ENCODE measurements at regions of chr2 and their contacts with region 1.

Region 1: DNA sequence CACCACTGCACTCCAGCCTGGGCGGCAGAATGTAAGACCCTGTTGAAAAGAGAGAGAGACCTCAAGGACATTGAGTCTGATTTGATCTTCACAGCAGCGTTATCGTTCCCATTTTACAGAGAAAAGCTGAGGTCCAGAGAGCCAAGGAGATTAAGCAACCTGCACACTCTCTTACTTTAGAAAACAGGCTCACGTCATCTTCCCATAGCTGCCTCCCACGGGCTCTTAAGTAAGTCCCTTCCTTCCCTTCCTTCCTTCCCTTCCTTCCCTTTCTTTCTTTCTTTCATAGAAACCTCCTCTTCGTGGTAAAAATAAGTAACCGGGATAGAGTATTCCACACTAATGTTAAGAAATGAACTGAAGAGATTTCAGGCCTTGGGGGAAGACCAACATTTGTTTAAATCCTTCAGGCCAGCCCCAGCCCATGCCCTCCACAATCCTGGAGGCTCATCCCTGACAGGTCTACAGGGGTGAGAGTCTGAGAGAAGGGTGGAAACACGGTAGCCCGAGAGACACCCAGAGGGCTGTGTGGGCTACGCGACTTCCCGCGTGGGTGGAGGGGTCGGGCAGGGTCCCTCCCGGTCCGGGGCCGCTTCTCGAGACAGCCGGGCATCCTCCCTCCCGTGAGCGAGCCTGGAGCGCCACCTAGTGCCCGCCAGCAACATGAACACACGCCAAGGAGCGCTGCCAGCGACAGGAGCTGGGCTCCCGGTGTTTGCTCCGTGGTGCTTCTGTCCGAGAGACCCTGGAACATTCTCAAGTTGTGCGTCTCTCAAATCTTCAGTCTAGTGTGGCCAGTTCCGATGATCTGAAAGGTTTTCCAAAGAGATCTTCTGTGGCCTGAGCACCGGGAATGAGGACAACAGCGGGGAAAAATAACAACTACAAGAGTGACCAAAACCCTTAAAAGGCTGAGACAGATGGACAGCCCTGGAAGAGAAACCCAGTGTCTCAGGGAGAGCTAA is 160.3 kb downstream of the INO80D start:
- DNase-seq: peak; percentile 88
- H3K4me3 ChIP-seq: peak overlapping the region; percentile 23 to 59
- H3K27ac ChIP-seq: no peak overlapping the region
- H3K4me1 ChIP-seq: peaks cover 5% of the 10 kb centered on the region in 2 experiments; a peak in 2 of 4 replicates
- H3K27me3 ChIP-seq: peaks cover 14% of the 10 kb centered on the region; the same call in 1 of the 2 replicates
- CTCF ChIP-seq: peak; percentile 94
- EP300 ChIP-seq: no peak
- RAD21 ChIP-seq: peak; percentile 97

Region 2: DNA sequence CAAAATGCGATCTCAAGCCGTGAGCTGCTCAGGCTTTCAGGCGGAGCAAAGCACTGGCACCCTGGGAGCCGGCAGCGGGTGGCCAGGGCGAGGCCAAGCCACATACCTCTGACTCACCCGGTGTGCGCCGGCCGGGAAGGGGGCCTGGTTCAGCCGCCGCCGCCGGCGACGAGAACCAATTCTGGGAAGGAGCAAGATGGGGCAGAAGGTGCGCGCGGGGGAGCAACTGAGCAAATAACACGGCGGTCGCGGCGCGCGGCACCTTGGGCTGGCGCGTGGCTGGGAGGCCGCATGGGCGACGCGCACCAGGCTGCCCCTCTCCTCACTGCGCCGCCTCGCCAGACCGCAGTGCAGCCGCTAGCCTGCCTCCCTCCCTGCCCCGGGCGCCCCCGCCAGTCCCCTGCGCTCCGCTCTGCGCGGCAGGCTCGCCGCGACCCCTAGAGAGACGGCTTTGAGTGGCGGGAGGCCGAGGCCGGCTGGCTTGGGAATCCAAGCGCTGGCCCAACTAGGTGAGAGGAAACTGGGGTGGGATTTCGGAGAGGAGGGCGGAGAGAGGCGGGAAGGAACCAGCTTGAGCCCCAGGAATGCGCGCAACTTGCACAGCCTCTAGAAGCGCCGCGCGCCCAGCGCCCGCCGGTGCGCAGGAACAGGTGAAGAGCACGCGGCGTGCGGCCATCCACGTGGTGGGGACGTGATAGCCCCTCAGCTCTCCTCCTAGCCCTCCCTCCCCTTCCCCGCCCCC is 240.2 kb before region 1 on chr2:
- CTCF ChIA-PET with region 1: interaction called, 22 read pairs
- POLR2A ChIA-PET with region 1: no interaction called
- DNase-seq: peak; percentile 76
- H3K4me3 ChIP-seq: peak overlapping the region; percentile 71 to 77
- H3K27ac ChIP-seq: peak overlapping the region in 1 of 2 experiments; percentile 47; a peak in 2 of 4 replicates
- H3K4me1 ChIP-seq: peaks cover 37 to 43% of the 10 kb centered on the region in 2 experiments
- H3K27me3 ChIP-seq: no peaks in the 10 kb centered on the region
- CTCF ChIP-seq: no peak
- EP300 ChIP-seq: no peak
- RAD21 ChIP-seq: no peak

Region 3: GRCh38 chr2:205751569-205752031 is 174.1 kb before region 1 on chr2:
- CTCF ChIA-PET with region 1: interaction called, 14 read pairs
- POLR2A ChIA-PET with region 1: no interaction called
- DNase-seq: no peak
- H3K4me3 ChIP-seq: no peak overlapping the region
- H3K27ac ChIP-seq: no peak overlapping the region
- H3K4me1 ChIP-seq: peaks cover 0 to 40% of the 10 kb centered on the region in 2 experiments; a peak in 1 of 4 replicates
- H3K27me3 ChIP-seq: no peaks in the 10 kb centered on the region
- CTCF ChIP-seq: no peak
- EP300 ChIP-seq: no peak
- RAD21 ChIP-seq: no peak

Region 4: DNA sequence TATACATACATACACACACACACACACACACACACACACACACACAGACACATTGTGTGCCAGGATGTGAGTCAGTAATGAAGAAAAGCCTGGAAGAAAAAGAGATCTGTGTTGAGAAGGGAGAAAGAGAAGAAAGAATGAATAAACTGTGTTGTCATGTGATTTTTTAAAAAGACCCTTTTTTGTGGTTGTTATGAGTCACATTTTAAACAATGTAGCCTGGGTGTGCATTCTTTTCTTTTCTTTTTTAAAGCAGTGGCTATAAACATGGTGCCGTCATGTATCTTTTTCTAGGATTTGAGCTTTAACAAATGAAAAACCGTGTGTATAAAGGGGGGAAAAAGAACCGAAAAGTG is 156.2 kb before region 1 on chr2:
- CTCF ChIA-PET with region 1: interaction called, 78 read pairs
- POLR2A ChIA-PET with region 1: no interaction called
- DNase-seq: no peak
- H3K4me3 ChIP-seq: no peak overlapping the region
- H3K27ac ChIP-seq: peak overlapping the region in 1 of 2 experiments; percentile 68; a peak in 2 of 4 replicates
- H3K4me1 ChIP-seq: peaks cover 22 to 24% of the 10 kb centered on the region in 2 experiments; a peak in 3 of 4 replicates
- H3K27me3 ChIP-seq: no peaks in the 10 kb centered on the region
- CTCF ChIP-seq: no peak
- EP300 ChIP-seq: peak in 1 of 2 experiments; percentile 40; a peak in 1 of 4 replicates
- RAD21 ChIP-seq: no peak

Region 5: GRCh38 chr2:205815673-205816072 is 110.0 kb before region 1 on chr2:
- CTCF ChIA-PET with region 1: interaction called, 11 read pairs
- POLR2A ChIA-PET with region 1: no interaction called
- DNase-seq: peak; percentile 34
- H3K4me3 ChIP-seq: no peak overlapping the region
- H3K27ac ChIP-seq: peak overlapping the region in 1 of 2 experiments; percentile 11; a peak in 1 of 4 replicates
- H3K4me1 ChIP-seq: peaks cover 0 to 12% of the 10 kb centered on the region in 2 experiments; a peak in 2 of 4 replicates
- H3K27me3 ChIP-seq: no peaks in the 10 kb centered on the region
- CTCF ChIP-seq: no peak
- EP300 ChIP-seq: no peak
- RAD21 ChIP-seq: no peak

Region 6: DNA sequence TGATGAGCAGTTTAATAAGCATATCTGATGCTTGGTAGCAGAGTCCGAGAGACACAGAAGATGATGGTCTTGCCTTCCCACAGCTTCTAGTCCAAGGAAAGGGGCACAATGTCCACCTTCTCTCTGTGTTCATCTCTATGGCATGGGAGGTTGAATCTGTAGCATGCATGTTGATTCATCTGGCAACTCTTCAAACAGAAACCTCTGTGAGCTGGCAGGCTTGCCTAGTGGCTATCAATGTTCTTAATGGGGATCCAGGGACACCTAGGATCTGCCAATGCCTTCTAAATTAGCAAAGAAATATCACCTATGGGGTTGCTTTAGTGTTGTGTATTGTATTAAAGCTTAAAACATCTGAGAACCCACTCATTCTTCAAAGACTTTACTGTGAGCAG is 10.5 kb before region 1 on chr2:
- CTCF ChIA-PET with region 1: interaction called, 19 read pairs
- POLR2A ChIA-PET with region 1: no interaction called
- DNase-seq: no peak
- H3K4me3 ChIP-seq: no peak overlapping the region
- H3K27ac ChIP-seq: no peak overlapping the region
- H3K4me1 ChIP-seq: no peaks in the 10 kb centered on the region; a peak in 1 of 4 replicates
- H3K27me3 ChIP-seq: peaks cover 8% of the 10 kb centered on the region; the same call in 1 of the 2 replicates
- CTCF ChIP-seq: no peak
- EP300 ChIP-seq: no peak
- RAD21 ChIP-seq: no peak